HCT116 (cell line): ENCODE measurements at regions of chr10 and their contacts with region 1.

Region 1: GRCh38 chr10:99930731-99931550 is 78.8 kb downstream of the DNMBP start:
- DNase-seq: peak; percentile 89
- ATAC-seq: peak; percentile 76
- H3K4me3 ChIP-seq: peak overlapping the region; percentile 21 to 46
- H3K27ac ChIP-seq: peak overlapping the region; percentile 93
- H3K4me1 ChIP-seq: peaks cover 79 to 80% of the 10 kb centered on the region in 2 experiments
- H3K27me3 ChIP-seq: no peaks in the 10 kb centered on the region
- CTCF ChIP-seq: peak in 2 of 3 experiments; percentile 5 to 17; a peak in 1 of 6 replicates
- POLR2A ChIP-seq: no peak
- RAD21 ChIP-seq: peak; percentile 23; the same call in 1 of the 2 replicates

Region 2: DNA sequence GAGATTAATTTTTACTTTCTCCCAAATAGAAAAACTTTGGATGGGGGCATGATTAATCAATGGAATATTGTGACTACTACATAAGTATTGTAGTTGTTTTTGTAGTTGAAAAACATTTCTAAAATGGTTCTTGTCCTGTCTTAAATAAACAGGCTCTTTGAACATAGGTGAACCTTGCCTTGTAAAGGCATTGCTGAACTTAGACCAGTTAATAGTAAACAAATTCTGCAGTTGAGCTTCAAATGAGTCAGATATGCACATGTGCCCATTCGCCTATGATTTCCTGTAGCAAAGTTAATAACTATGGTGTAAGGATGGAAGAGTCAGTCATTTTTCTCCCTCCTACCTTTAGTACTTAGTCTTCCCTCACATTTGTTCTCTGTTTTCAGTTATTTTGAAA is 176.3 kb before region 1 on chr10:
- CTCF ChIA-PET with region 1: no interaction called
- POLR2A ChIA-PET with region 1: no interaction called
- RAD21 ChIA-PET with region 1: no interaction called
- intact Hi-C with region 1: no loop called
- DNase-seq: no peak
- ATAC-seq: no peak
- H3K4me3 ChIP-seq: no peak overlapping the region
- H3K27ac ChIP-seq: no peak overlapping the region
- H3K4me1 ChIP-seq: peaks cover 18 to 26% of the 10 kb centered on the region in 2 experiments
- H3K27me3 ChIP-seq: no peaks in the 10 kb centered on the region
- CTCF ChIP-seq: no peak
- POLR2A ChIP-seq: no peak
- RAD21 ChIP-seq: no peak

Region 3: GRCh38 chr10:99920901-99921300 is 10.0 kb before region 1 on chr10:
- CTCF ChIA-PET with region 1: no interaction called
- POLR2A ChIA-PET with region 1: interaction called, 13 read pairs
- RAD21 ChIA-PET with region 1: no interaction called
- intact Hi-C with region 1: no loop called
- DNase-seq: no peak
- ATAC-seq: peak; percentile 10; the same call in 1 of the 2 replicates
- H3K4me3 ChIP-seq: no peak overlapping the region
- H3K27ac ChIP-seq: no peak overlapping the region
- H3K4me1 ChIP-seq: peaks cover 67 to 78% of the 10 kb centered on the region in 2 experiments
- H3K27me3 ChIP-seq: no peaks in the 10 kb centered on the region
- CTCF ChIP-seq: no peak
- POLR2A ChIP-seq: no peak
- RAD21 ChIP-seq: no peak